ENCODE measurements at regions of chr15 and their contacts with region 1.

Region 1: GRCh38 chr15:26670116-26670515 is 102.8 kb downstream of the GABRB3 start:
- DNase-seq: peak in 1 of 5 donors; percentile 26
- ATAC-seq: peak in 1 of 4 donors; percentile 39
- H3K4me3 ChIP-seq: no peak overlapping the region
- H3K27ac ChIP-seq: no peak overlapping the region
- H3K4me1 ChIP-seq: peaks cover 0 to 10% (median 0%) of the 10 kb centered on the region in 12 donors
- H3K27me3 ChIP-seq: peaks cover 0 to 3% (median 0%) of the 10 kb centered on the region in 9 donors
- CTCF ChIP-seq: no peak
- POLR2A ChIP-seq: no peak

Region 2: GRCh38 chr15:26580943-26581342 is 89.2 kb before region 1 on chr15:
- intact Hi-C with region 1: no loop called
- DNase-seq: no peak
- ATAC-seq: no peak
- H3K4me3 ChIP-seq: no peak overlapping the region
- H3K27ac ChIP-seq: no peak overlapping the region
- H3K4me1 ChIP-seq: no peaks in the 10 kb centered on the region
- H3K27me3 ChIP-seq: no peaks in the 10 kb centered on the region
- CTCF ChIP-seq: no peak
- POLR2A ChIP-seq: no peak

Region 3: DNA sequence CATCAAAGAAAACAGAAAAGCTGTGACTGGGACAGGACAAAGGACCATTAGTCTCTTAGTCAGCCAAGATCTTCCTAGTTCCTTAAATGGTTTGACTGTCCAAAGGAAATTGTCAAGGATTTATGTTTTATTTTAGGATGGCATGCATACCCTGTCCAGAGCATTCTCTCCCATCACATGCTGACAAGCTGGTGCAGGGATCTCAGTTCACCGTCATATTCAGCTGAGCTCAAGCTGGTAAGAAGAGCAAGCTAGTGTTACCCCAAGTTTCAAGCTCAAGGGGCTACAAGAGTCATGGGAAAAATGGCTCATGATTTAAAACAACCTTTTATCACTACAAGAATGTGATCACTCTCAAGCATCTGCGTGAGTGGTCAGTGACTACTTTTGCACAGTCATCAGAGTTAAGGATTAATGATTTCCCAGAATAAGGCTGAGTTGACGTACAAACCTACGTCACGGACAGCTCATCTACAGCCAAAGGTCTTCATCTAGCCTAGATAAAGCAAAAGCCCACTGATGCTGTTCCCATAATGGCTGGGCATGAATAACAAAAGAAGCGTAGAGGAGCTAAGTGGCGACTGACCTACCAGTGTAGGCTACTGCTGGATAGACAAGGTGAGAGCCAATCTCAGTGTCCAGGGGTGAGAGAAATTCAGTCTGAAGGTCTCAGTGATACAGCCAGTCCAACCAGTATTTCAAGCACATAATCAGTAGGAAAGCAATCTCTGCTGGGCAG is 54.8 kb before region 1 on chr15:
- intact Hi-C with region 1: loop called in 1 of 10 experiments (anchors 10 kb)
- DNase-seq: no peak
- ATAC-seq: peak in 1 of 4 donors; percentile 80
- H3K4me3 ChIP-seq: no peak overlapping the region
- H3K27ac ChIP-seq: no peak overlapping the region
- H3K4me1 ChIP-seq: no peaks in the 10 kb centered on the region
- H3K27me3 ChIP-seq: no peaks in the 10 kb centered on the region
- CTCF ChIP-seq: no peak
- POLR2A ChIP-seq: no peak

Measured in heart left ventricle (tissue), 16 donors.